Dendritic cell treated with granulocyte-macrophage colony-stimulating factor and Interleukin-4, amounts not matched to agents 40 ng/mL and 50 ng/mL, for 4 days (primary cell): ENCODE measurements at regions of chr19 and their contacts with region 1.

Region 1: DNA sequence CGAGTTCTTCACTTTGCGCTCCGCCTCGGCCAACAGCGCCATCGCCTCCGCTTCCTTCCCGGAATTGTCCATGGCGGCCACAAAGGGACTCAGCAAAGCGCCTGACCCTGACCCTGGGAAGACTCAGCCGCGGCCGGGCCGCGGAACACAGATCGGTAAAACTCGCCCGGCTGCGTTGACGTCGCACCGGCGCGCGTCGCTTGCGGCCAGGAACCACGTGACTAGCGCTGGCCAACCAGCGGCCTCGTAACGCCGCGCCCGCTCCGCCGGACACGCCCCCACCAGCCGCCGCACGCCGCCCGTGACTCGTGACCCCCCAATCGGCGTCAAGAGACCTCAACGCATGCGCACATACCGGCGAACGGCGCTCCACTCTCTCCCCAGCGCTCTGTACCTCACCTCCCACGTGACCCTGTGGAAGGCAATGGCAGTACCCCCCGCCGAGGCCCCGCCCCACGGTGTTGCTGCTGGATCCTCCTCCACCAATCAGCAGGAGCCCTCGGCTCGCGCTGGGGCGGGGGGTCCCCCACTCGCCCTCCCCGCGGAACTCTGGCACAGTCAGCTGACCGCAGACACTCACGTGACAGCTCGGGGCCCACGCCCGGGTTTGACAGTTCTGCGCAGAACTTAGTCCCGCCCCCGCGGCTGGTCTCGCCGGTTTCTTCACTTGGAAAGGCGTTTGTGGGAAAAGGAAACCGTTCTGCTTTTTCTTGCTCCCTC is at the start of gene NAPA:
- H3K4me3 Mint-ChIP-seq: peak within 1 kb of the TSS; percentile 100
- H3K27ac Mint-ChIP-seq: peak within 1 kb of the TSS; percentile 100
- H3K4me1 Mint-ChIP-seq: peaks cover 60% of the 10 kb centered on the region
- H3K27me3 Mint-ChIP-seq: peaks cover 7% of the 10 kb centered on the region

Region 2: DNA sequence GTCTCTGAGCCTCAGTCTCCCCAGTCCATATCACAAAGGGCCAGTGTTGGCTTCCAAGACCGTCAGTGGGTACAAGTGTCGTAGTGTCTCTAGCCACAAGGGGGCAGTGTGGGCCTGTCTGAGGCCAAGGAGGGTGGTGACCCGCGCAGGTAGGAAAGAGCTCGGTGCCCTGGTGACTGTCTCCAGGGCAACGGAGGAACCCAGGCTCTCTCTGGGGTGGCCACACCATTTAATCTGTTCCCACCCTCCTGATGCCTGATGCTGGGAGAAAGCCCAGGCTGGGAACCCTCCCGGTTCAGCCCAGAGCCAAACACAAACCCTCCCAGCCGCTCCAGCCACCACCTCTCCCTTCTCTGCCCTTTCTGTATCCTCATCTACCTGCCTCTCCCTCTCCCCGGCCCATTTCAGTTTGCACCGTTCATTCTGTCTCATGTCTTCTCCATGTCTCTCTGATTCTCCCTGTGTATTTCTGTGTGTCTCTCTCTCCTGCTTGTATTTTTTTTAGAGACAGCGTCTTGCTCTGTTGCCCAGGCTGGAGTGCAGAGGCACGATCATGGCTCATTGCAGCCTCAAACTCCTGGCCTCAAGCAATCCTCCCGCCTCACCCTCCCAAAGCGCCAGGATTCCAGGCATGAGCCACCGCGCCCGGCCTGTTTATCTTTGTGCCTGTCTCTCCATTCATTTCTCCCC is 78.2 kb before region 1 on chr19:
- intact Hi-C with region 1: loop called (anchors 5 kb)
- H3K4me3 Mint-ChIP-seq: no peak overlapping the region
- H3K27ac Mint-ChIP-seq: no peak overlapping the region
- H3K4me1 Mint-ChIP-seq: peaks cover 11% of the 10 kb centered on the region
- H3K27me3 Mint-ChIP-seq: peaks cover 47% of the 10 kb centered on the region

Region 3: DNA sequence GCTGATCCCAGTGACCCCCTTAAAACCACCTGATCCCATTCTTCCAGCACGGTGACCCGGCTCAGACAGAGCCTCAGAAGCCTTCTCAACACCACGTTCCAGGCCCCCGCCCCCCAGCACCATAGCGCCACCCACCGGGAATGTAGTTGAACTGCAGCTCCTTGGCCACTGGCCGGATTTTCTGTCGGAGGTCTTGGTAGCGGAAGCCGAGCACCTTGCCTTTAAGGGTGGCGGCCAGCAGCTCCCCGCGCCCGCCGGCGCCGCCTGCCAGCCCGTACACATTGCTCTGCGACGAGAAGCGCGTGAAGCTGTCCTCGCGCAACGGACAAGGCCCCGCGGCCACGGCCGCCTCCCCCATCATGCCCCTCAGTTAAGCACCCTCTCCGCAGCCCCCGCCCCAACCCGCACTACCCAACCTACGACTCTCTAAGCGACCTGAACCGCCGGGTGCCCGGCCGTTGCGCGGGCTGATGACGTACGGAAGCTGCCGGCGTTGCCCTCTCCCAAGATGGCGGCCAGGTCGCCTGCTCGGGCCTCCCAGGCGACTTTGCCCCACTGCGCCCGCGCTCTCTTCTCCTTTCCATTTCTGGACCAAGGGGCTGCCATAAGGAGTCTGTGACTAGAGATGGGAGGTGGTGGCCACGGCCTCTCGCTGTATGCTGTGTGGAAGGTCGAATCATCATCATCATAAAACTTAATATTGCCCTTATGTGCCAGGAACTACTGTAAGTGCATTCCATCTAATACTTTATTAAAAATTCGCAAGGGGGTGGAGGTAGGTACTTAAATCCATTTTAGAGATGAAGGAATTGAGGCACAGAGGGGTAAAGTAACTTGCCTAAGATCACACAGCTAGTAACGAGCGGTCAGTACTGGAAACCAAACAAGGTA is 31.0 kb before region 1 on chr19 and contains the start of gene KPTN:
- intact Hi-C with region 1: loop called (anchors 1 kb)
- H3K4me3 Mint-ChIP-seq: peak within 1 kb of the TSS; percentile 87
- H3K27ac Mint-ChIP-seq: peak within 1 kb of the TSS; percentile 99
- H3K4me1 Mint-ChIP-seq: peaks cover 43% of the 10 kb centered on the region
- H3K27me3 Mint-ChIP-seq: peaks cover 8% of the 10 kb centered on the region

Region 4: DNA sequence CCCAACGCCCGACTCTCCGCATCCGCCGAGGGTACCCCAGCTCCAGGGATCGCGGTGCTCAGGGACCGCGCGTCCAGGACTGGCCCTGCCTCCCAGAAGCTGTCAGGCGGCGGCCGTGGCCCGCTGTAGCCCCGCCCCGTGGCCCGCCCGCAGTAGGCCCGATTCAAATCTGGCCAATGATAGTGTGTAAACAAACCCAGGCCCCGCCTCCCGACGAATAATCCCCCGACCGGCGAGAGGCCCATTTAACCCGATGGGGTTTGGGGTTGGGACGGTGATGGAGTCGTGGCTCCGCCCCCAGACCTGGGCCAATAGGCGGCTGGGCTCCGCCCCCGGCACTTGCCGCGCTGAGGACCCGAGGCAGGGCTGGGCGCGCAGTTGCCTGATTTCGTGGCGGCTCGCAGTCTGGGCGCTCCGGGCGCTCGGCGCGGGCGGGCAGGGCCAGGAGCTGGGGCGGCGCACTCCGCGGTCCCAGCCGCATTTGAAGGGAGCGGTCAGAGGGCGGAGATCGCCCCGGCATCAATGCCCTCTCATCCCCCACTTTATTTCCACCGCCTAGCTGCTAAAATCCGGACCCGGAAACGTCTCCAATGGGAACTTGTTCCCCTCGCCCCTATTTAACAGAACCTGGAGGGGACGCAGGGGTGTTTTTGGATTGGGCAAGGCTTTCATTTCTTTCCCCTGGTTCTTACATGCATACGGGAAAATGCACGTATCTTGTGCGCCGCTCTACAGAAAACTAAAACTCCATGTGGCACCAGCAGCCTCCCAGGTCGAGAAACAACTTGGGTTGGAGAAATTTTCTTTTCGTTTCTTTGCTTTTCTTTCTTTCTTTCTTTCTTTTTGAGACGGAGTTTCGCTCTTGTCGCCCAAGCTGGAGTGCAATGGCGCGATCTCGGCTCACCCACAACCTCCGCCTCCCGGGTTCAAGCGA is 85.5 kb after region 1 on chr19:
- intact Hi-C with region 1: loop called (anchors 2 kb)
- H3K4me3 Mint-ChIP-seq: peak overlapping the region; percentile 85
- H3K27ac Mint-ChIP-seq: peak overlapping the region; percentile 74
- H3K4me1 Mint-ChIP-seq: peaks cover 66% of the 10 kb centered on the region
- H3K27me3 Mint-ChIP-seq: peaks cover 15% of the 10 kb centered on the region

Region 5: GRCh38 chr19:47608074-47608918 is 93.3 kb after region 1 on chr19:
- intact Hi-C with region 1: loop called (anchors 2 kb)
- H3K4me3 Mint-ChIP-seq: peak overlapping the region; percentile 86
- H3K27ac Mint-ChIP-seq: peak overlapping the region; percentile 96
- H3K4me1 Mint-ChIP-seq: peaks cover 44% of the 10 kb centered on the region
- H3K27me3 Mint-ChIP-seq: peaks cover 9% of the 10 kb centered on the region

Region 6: GRCh38 chr19:47663841-47664771 is 149.1 kb after region 1 on chr19:
- intact Hi-C with region 1: loop called (anchors 10 kb)
- H3K4me3 Mint-ChIP-seq: peak overlapping the region; percentile 26
- H3K27ac Mint-ChIP-seq: peak overlapping the region; percentile 89
- H3K4me1 Mint-ChIP-seq: peaks cover 86% of the 10 kb centered on the region
- H3K27me3 Mint-ChIP-seq: no peaks in the 10 kb centered on the region

Region 7: GRCh38 chr19:47697863-47698609 is 183.0 kb after region 1 on chr19:
- intact Hi-C with region 1: loop called (anchors 10 kb)
- H3K4me3 Mint-ChIP-seq: no peak overlapping the region
- H3K27ac Mint-ChIP-seq: peak overlapping the region; percentile 62
- H3K4me1 Mint-ChIP-seq: peaks cover 22% of the 10 kb centered on the region
- H3K27me3 Mint-ChIP-seq: no peaks in the 10 kb centered on the region